A549 (cell line): ENCODE measurements at regions of chr4 and their contacts with region 1.

Region 1: DNA sequence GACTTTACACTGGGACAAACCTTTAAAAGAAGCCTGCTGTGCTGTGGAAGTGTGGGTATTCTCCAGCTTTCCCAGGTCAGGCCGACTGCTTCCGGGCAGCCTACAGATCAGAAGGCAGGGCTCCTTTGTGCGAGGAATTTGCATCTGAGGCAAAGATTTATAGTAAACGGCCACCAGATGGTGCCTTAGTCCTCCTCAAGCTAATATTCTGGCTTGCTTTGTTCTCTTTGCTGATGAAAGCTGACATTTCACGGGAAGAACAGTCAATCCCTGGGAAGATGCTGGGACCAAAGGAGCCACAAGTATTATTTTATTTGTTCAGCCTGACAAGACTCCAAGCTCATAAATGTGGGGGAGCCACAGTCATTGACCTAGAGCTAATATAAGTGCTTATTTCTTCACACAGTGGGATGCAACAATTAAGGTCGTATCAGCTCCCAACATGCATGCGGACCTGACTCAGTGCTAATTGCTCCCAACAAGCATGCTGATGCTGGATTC is 120.7 kb upstream of the TRIM2 start:
- DNase-seq: peak; percentile 74
- ATAC-seq: peak; percentile 85 to 92
- H3K4me3 ChIP-seq: no peak overlapping the region
- H3K27ac ChIP-seq: peak overlapping the region; percentile 49 to 68; a peak in 5 of 6 replicates
- H3K4me1 ChIP-seq: peaks cover 3% of the 10 kb centered on the region; the same call in 1 of the 3 replicates
- CTCF ChIP-seq: peak; percentile 66
- EP300 ChIP-seq: no peak
- POLR2A ChIP-seq: no peak
- RAD21 ChIP-seq: peak; percentile 79 to 81

Region 2: DNA sequence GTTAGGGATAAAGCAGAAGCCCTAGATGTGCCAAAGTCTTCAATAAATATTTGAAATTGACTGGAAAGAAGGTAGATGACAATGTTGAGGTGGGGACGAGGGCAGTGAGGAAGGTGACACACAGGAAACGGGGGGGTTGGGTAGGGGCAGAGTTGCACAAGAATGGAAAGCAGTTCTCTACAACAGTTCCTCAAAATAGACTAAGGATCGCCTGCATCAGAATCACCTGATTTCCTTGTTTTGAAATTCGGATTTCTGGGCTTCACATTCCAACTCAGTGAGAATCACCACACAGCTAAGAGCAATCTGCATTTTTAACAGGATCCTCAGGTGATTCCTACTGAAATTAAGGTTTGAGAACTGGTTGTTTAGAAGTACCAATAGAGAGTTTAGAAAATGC is 233.1 kb before region 1 on chr4:
- CTCF ChIA-PET with region 1: interaction called, 11 read pairs
- POLR2A ChIA-PET with region 1: no interaction called
- DNase-seq: no peak
- ATAC-seq: no peak
- H3K4me3 ChIP-seq: no peak overlapping the region
- H3K27ac ChIP-seq: no peak overlapping the region
- H3K4me1 ChIP-seq: peaks cover 5% of the 10 kb centered on the region; the same call in 1 of the 3 replicates
- CTCF ChIP-seq: no peak
- EP300 ChIP-seq: no peak
- POLR2A ChIP-seq: no peak
- RAD21 ChIP-seq: no peak

Region 3: DNA sequence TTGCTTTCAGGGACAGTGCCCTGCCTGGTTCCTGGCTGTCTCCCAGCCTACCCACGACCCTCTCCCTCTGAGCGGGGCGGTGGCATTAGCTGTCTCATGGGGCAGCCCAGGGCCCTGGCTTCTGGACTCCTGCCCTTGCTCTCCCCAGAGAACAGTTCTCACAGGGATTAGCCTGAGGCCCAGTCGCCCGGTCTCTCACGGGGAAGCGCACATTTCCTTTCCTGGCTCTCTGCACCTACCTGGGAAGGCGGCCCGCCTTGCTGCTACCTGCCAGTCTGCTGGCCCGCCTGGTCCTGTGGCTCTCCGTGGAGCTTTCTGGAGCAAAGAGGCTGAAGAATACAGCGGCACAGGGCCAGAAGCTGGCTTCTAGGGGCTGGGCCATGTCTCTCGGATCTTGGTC is 18.9 kb before region 1 on chr4:
- CTCF ChIA-PET with region 1: interaction called, 11 read pairs
- POLR2A ChIA-PET with region 1: no interaction called
- DNase-seq: no peak
- ATAC-seq: no peak
- H3K4me3 ChIP-seq: no peak overlapping the region
- H3K27ac ChIP-seq: no peak overlapping the region
- H3K4me1 ChIP-seq: peaks cover 17% of the 10 kb centered on the region
- CTCF ChIP-seq: no peak
- EP300 ChIP-seq: no peak
- POLR2A ChIP-seq: no peak
- RAD21 ChIP-seq: no peak

Region 4: DNA sequence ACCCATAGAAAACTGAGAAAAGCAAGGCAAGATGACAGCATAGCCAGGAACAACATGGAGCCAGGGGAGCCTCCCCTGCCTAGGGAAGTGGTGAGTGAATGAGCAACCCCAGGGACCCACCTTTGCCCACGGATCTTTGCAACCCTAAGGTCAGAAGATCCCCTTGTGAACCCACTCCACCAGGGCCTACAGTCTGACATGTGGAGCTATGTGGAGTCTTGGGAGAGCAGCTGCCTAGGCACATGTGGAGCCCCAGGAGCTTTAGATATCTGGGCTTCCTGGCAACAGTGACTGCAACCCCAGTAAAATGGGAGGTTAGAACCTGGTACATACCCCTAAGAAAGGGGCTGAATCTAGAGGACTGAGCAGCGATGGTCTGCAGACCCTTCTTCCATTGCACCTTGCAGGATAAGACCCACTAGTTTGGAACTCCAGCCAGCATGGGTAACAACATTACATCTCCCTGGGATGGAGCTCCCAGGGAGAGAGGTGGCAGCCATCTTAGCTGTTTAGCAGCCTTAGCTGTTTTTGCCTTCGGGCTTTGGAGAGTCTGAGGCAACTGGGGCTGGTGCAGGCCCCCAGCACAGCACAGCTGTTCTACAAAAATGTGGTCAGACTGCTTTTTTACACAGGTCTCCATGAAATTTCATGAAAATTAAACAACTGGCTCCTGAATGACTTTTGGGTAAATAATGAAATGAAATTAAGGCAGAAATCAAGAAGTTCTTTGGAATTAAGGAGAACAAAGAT is 16.1 kb after region 1 on chr4:
- CTCF ChIA-PET with region 1: interaction called, 11 read pairs
- POLR2A ChIA-PET with region 1: no interaction called
- DNase-seq: no peak
- ATAC-seq: no peak
- H3K4me3 ChIP-seq: no peak overlapping the region
- H3K27ac ChIP-seq: no peak overlapping the region
- H3K4me1 ChIP-seq: no peaks in the 10 kb centered on the region
- CTCF ChIP-seq: no peak
- EP300 ChIP-seq: no peak
- POLR2A ChIP-seq: no peak
- RAD21 ChIP-seq: no peak

Region 5: DNA sequence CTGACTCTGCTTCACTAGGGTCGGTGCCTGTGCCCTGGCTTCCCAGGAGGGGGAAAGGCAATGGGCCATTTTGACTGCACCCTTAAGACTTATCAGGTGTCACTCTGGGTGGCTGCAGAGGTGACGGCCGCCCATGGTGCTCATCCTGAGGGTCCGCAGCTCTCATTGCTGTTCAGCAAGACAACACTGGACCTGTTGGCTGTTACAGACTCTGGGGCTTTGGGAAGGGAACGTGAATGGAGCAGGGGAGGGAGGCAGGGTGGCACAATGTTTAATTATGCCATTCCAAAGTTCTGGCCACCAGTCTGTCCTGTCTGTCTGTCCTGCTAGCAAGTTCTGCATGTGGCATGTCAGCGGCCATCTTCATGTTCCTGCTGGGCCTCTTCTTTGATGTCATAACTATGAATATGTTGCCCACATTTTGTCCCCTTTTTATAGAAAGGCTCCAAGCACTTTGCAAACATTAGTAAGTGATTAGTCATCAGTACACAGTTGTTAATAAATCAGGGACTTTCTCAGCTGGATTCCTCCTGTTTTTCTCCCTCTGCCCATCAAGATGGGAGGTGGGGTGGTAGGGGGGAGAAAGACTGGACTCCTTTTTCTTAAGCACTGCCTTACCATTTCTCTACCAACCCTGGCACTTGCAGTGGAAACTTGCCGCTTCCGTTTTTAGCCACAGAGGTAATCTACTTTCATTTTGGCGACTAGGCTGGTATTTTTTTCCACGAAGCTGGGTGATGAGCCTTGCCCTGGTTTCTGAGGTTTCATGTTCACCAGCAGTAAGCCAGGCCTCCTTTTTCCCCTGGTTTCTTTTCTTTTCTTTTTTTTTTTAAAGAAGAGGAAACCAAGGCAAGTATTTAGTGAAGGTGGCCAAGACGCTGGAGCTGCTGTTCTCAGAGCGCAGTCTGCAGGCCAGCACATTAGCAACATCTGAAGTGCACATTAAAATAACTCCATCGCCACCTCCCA is 32.1 kb after region 1 on chr4:
- CTCF ChIA-PET with region 1: interaction called, 68 read pairs
- POLR2A ChIA-PET with region 1: no interaction called
- DNase-seq: peak; percentile 52 to 69
- ATAC-seq: peak; percentile 77 to 81
- H3K4me3 ChIP-seq: peak overlapping the region; percentile 20; the same call in 1 of the 3 replicates
- H3K27ac ChIP-seq: peak overlapping the region; percentile 80 to 92
- H3K4me1 ChIP-seq: peaks cover 34% of the 10 kb centered on the region
- CTCF ChIP-seq: no peak
- EP300 ChIP-seq: no peak
- POLR2A ChIP-seq: no peak
- RAD21 ChIP-seq: no peak

Region 6: GRCh38 chr4:153122855-153123254 is 39.4 kb after region 1 on chr4:
- CTCF ChIA-PET with region 1: interaction called, 155 read pairs
- POLR2A ChIA-PET with region 1: interaction called, 3 read pairs
- DNase-seq: no peak
- ATAC-seq: no peak
- H3K4me3 ChIP-seq: no peak overlapping the region
- H3K27ac ChIP-seq: no peak overlapping the region
- H3K4me1 ChIP-seq: peaks cover 31% of the 10 kb centered on the region
- CTCF ChIP-seq: no peak
- EP300 ChIP-seq: no peak
- POLR2A ChIP-seq: no peak
- RAD21 ChIP-seq: no peak

Region 7: DNA sequence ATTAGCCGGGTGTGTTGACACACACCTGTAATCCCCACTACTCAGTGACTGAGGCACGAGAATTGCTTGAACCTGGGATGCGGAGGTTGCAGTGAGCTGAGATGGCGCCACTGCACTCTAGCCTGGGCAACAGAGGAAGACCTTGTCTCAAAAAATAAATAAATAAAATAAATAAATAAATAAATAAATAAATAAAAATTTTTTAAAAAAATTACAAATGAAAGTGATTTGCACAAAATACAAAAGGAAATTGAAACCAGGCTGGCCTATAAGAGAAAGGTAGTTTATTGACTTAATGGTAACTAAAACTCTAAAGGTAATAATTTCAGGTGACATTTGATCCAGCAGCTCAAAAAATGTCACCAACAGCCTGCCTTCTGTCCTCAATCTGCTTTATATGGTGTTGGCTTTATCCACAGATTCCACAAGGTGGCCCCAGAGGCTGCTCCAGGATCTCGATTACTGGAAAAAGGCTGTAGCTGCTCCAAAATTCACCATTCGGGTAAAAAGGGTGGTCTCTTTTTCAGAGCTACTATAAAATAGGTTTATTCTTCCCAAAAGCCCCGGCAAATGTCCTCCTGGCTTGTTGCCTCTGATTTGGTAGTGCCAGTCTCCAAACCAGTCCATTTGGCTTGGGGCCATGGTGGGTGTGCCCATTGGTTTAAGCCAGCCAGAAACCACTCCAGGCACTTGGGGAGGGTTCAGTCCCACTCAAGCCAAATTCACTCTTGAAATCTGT is 59.4 kb after region 1 on chr4:
- CTCF ChIA-PET with region 1: interaction called, 11 read pairs
- POLR2A ChIA-PET with region 1: no interaction called
- DNase-seq: peak; percentile 62 to 70
- ATAC-seq: peak; percentile 82 to 90
- H3K4me3 ChIP-seq: 0 out of 3 replicates have a peak overlapping the region, but pooled peaks have one; percentile 13
- H3K27ac ChIP-seq: peak overlapping the region; percentile 75 to 81
- H3K4me1 ChIP-seq: peaks cover 33% of the 10 kb centered on the region
- CTCF ChIP-seq: peak; percentile 88
- EP300 ChIP-seq: no peak
- POLR2A ChIP-seq: no peak
- RAD21 ChIP-seq: peak; percentile 85 to 93